Activated naive CD4-positive, alpha-beta T cell treated with anti-CD3 and anti-CD28 coated beads for 36 hours (primary cell): ENCODE measurements at regions of chr9 and their contacts with region 1.

Region 1: DNA sequence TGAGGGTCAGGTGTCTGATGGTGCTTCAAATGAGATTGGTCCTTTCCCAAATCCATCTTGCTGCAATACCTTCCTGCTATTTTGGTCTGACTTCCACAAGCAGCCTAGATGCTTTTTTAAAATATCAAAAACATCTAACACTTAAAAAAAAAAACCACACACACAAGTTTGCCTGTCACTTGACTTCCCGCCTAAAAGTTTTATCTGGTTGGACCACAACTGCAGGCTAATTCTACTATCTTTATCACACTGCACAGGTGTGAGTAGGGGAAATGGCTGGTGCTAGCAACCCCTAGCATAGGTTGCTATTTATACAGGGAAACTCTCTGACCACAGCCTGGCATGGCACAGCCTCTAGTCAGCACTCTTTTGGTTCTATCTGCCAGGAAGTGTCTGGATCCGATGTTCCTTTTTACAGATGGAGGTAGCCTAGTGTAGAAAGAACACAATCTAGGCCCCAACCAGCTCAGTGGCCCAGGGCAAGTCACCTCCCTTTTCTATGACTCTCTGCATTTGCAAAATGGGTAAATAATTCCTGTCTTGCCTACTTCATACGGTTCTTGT is at the start of gene HEMGN:
- DNase-seq: peak; percentile 72
- H3K4me3 Mint-ChIP-seq: peak within 1 kb of the TSS; percentile 48
- H3K27ac Mint-ChIP-seq: peak within 1 kb of the TSS; percentile 79
- H3K4me1 Mint-ChIP-seq: peaks cover 38% of the 10 kb centered on the region
- H3K27me3 Mint-ChIP-seq: no peaks in the 10 kb centered on the region
- total RNA-seq, gene HEMGN: 1.8 to 1.9 TPM

Region 2: DNA sequence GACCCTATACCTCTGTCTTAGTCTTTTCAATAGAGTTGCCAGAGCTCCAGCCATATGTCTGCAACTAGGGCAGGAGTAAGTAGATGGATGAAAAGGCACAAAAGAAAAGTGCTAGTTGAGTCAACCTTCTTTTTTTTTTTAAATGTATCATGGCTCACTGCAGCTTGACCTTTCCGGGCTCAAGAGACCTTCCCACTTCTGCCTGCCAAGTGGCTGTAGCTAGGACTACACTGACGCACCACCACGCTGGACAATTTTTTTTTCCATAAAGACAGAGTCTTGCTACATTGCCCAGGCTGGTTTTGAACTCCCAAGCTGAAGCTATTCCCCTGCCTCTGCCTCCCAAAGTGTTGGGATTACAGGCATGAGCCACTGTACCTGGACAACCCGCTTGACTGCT is 57.8 kb before region 1 on chr9:
- CTCF ChIA-PET with region 1: no interaction called
- intact Hi-C with region 1: no loop called
- DNase-seq: no peak
- H3K4me3 Mint-ChIP-seq: no peak overlapping the region
- H3K27ac Mint-ChIP-seq: no peak overlapping the region
- H3K4me1 Mint-ChIP-seq: no peaks in the 10 kb centered on the region
- H3K27me3 Mint-ChIP-seq: no peaks in the 10 kb centered on the region

Region 3: DNA sequence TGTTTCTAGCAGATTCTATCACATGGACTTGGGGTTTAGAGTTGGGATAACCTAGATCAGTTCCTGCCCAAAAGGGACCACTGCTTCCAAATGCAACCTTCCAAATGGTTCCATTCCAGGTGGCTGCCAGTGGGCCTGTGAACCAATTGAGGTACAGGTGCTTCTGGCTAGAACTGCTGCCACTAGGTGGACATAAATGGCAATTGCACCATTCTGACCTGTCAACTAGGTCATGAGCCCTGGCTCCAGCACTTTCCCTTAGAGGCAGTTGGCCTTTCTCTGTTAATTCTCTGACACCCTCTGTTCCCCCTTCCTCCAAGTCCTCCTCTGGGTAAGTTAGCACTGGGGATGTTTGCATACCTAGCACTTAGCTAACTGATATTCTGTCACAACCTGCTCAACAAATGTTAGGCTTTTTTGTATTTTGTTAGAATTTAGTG is 16.4 kb after region 1 on chr9:
- CTCF ChIA-PET with region 1: interaction called, 10 read pairs
- intact Hi-C with region 1: loop called (anchors 2 kb)
- DNase-seq: peak; percentile 75
- H3K4me3 Mint-ChIP-seq: no peak overlapping the region
- H3K27ac Mint-ChIP-seq: no peak overlapping the region
- H3K4me1 Mint-ChIP-seq: no peaks in the 10 kb centered on the region
- H3K27me3 Mint-ChIP-seq: no peaks in the 10 kb centered on the region